ENCODE measurements at regions of chr5 and their contacts with region 1.

Region 1: DNA sequence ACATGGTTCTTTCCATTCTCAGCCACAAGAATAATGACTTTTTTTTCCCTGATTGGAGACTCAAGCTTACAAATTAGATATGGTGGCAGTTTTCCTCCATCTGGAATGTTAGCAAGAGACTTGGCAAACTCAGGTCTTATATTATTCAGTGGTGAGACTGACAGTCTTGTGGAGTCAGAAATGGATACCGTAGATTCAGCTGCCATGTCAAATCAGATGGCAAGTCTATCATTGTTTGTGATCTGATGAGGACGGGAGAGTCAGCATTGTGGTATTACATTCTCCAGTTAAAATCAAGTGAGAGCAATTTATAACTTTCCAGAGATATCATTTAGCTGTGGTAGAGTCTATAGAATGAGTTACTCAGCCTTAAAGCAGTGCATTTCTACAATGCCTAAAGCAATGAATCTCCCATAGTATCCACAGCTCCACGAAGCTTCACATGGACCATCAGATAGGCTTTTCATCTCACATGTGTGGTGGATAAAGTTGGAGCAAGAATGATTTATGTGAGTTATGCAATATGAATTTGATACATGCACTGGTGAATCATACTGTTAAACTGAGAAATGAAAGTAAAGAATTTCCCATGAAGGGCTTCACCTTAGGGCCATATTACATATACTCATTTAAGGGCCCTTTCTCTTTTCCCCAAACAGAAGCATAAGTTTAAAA is 430.6 kb downstream of the ZNF608 start:
- DNase-seq: no peak
- ATAC-seq: no peak
- H3K4me3 ChIP-seq: no peak overlapping the region
- H3K27ac ChIP-seq: no peak overlapping the region
- H3K4me1 ChIP-seq: no peaks in the 10 kb centered on the region
- H3K27me3 ChIP-seq: no peaks in the 10 kb centered on the region
- CTCF ChIP-seq: no peak
- EP300 ChIP-seq: no peak
- POLR2A ChIP-seq: no peak
- RAD21 ChIP-seq: no peak

Region 2: DNA sequence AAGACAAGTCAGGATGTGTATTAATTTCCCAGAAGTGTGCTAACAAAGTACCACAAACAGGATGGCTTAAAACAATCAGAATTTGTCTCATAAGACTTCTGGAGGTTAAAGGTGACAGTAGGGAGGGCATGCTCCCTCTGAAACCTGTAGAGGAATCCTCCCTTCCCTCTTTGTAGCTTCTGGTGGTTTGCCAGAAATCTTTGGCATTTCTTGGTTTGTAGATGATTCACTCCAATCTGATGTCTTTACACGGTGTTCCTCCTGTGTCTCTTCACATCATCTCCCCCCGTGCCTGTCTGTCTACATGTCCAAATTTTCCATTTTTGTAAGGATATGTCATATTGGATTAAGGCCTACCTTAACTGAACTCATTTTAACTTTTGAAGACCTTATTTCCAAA is 40.9 kb before region 1 on chr5:
- CTCF ChIA-PET with region 1: no interaction called
- POLR2A ChIA-PET with region 1: no interaction called
- in situ Hi-C with region 1: no loop called
- intact Hi-C with region 1: loop called (anchors 1 kb)
- DNase-seq: no peak
- ATAC-seq: no peak
- H3K4me3 ChIP-seq: no peak overlapping the region
- H3K27ac ChIP-seq: no peak overlapping the region
- H3K4me1 ChIP-seq: no peaks in the 10 kb centered on the region
- H3K27me3 ChIP-seq: no peaks in the 10 kb centered on the region
- CTCF ChIP-seq: no peak
- EP300 ChIP-seq: no peak
- POLR2A ChIP-seq: no peak
- RAD21 ChIP-seq: no peak

Region 3: DNA sequence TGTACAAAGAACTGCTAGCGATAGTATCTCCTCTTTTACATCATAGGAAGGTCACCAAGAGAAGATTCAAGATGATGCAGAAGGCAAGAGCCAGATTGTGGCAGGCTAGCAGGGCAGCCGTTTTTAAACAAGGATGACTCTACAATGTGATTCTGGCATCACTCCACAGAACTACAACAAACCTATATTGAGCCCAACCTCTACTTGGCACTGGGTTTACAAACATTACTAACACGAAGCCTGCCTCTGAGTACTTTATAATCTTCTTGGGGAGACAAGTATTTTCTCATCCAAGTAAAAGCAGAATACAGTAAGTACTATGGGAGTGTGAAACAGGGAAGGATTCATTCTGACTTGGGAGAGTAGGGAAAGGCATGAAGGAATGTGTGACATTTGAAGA is 18.1 kb before region 1 on chr5:
- CTCF ChIA-PET with region 1: no interaction called
- POLR2A ChIA-PET with region 1: no interaction called
- in situ Hi-C with region 1: no loop called
- intact Hi-C with region 1: no loop called
- DNase-seq: no peak
- ATAC-seq: no peak
- H3K4me3 ChIP-seq: no peak overlapping the region
- H3K27ac ChIP-seq: no peak overlapping the region
- H3K4me1 ChIP-seq: no peaks in the 10 kb centered on the region
- H3K27me3 ChIP-seq: no peaks in the 10 kb centered on the region; a peak in 1 of 5 replicates
- CTCF ChIP-seq: no peak
- EP300 ChIP-seq: no peak
- POLR2A ChIP-seq: no peak
- RAD21 ChIP-seq: no peak

Region 4: DNA sequence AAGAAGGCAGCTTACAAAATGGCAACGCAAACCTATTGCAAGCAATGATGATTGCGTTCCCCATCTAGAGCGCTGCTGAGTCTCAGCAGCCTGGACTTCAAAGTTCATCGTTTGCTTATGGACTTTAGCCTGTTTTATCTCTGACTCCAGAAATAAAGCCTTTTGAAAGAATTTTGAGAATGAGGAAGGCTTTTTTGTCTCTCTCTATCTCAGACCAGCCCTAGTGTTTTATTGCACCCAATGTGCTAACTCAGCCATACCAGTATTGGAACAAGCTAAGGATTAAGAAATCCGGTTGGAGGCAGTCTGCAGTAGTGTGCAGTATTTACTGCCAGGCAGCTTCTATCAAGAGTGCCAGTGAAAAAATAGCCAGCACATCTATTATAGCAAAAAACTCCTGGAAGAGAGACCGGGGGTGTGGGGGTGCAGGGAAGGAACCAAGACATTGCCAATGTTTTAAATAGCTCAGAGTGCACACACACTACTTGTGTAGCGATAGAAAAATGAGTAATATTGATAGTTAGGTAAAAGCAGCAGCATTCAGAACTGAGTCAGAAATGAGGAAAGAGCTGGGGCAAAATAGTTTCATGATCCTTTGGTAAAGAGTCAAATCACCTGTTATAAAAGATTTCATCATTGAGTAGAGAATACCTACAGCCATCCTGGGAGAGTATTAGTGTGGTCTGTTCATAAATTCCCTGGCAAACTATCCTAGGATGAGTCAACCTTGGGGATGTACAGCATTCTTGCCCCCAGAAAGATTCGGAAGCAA is 211.5 kb after region 1 on chr5:
- CTCF ChIA-PET with region 1: no interaction called
- POLR2A ChIA-PET with region 1: no interaction called
- in situ Hi-C with region 1: no loop called
- intact Hi-C with region 1: no loop called
- DNase-seq: peak; percentile 90
- ATAC-seq: peak; percentile 98
- H3K4me3 ChIP-seq: no peak overlapping the region
- H3K27ac ChIP-seq: peak overlapping the region; percentile 31
- H3K4me1 ChIP-seq: peaks cover 30% of the 10 kb centered on the region
- H3K27me3 ChIP-seq: peaks cover 0 to 5% of the 10 kb centered on the region in 2 experiments; a peak in 2 of 5 replicates
- CTCF ChIP-seq: peak; percentile 23; the same call in 1 of the 2 replicates
- EP300 ChIP-seq: peak in 1 of 2 experiments; percentile 77; a peak in 2 of 4 replicates
- POLR2A ChIP-seq: no peak
- RAD21 ChIP-seq: no peak

Measured in HepG2 (cell line).